Naive thymus-derived CD4-positive, alpha-beta T cell (primary cell): ENCODE measurements at regions of chr19 and their contacts with region 1.

Region 1: DNA sequence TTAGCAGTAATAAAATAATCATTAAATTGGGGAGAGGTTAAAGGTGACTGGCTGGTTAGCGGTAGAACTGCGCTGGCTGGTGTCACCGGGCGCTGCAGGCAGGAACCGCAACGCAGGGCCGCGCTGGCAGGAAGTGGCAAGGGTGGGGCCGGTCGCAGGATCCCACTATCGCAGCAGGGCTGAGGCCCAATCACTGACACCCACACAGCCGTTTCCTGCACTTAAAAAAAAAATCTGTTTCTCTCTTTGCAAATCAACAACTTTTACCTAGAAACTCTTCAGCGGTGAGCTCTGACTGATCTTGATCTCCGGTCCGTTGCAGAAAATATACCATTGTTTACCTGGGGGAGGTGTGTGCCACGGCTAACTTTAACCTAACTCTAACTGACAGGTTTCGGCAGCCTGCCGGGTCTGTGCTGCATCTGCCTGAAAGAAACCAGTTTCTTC is 46.9 kb downstream of the KLF2 start:
- DNase-seq: peak; percentile 73 to 97 (median 95)
- ATAC-seq: peak; percentile 72
- H3K4me3 ChIP-seq: peak overlapping the region; percentile 55
- H3K4me3 Mint-ChIP-seq: no peak overlapping the region
- H3K27ac ChIP-seq: peak overlapping the region; percentile 99
- H3K27ac Mint-ChIP-seq: no peak overlapping the region
- H3K4me1 ChIP-seq: peaks cover 89 to 94% of the 10 kb centered on the region in 2 donors
- H3K4me1 Mint-ChIP-seq: peaks cover 0 to 67% (median 53%) of the 10 kb centered on the region in 7 donors
- H3K27me3 ChIP-seq: no peaks in the 10 kb centered on the region
- H3K27me3 Mint-ChIP-seq: peaks cover 0 to 15% (median 0%) of the 10 kb centered on the region in 5 donors

Region 2: GRCh38 chr19:16197622-16198369 is 173.8 kb before region 1 on chr19 and contains the start of gene AP1M1:
- CTCF ChIA-PET with region 1: no interaction called
- POLR2A ChIA-PET with region 1: interaction called, 7 read pairs
- intact Hi-C with region 1: loop called in 1 of 2 experiments (anchors 2 kb)
- DNase-seq: peak; percentile 96 to 99 (median 97)
- ATAC-seq: peak; percentile 94
- H3K4me3 ChIP-seq: peak within 1 kb of the TSS; percentile 99
- H3K4me3 Mint-ChIP-seq: peak within 1 kb of the TSS; percentile 81 to 95 (median 90)
- H3K27ac ChIP-seq: peak within 1 kb of the TSS; percentile 95
- H3K27ac Mint-ChIP-seq: peak within 1 kb of the TSS; percentile 90 to 99 (median 97)
- H3K4me1 ChIP-seq: peaks cover 16 to 23% of the 10 kb centered on the region in 2 donors
- H3K4me1 Mint-ChIP-seq: peaks cover 38 to 49% (median 46%) of the 10 kb centered on the region in 7 donors
- H3K27me3 ChIP-seq: no peaks in the 10 kb centered on the region
- H3K27me3 Mint-ChIP-seq: no peaks in the 10 kb centered on the region
- total RNA-seq, gene AP1M1: 94.9 to 149 (median 125) TPM

Region 3: GRCh38 chr19:16247353-16248182 is 124.0 kb before region 1 on chr19:
- CTCF ChIA-PET with region 1: interaction called, 11 read pairs
- POLR2A ChIA-PET with region 1: interaction called, 88 read pairs
- intact Hi-C with region 1: no loop called
- DNase-seq: peak; percentile 60 to 89 (median 77)
- ATAC-seq: peak; percentile 95
- H3K4me3 ChIP-seq: no peak overlapping the region
- H3K4me3 Mint-ChIP-seq: peak overlapping the region; percentile 22 to 71 (median 56)
- H3K27ac ChIP-seq: no peak overlapping the region
- H3K27ac Mint-ChIP-seq: peak overlapping the region; percentile 48 to 94 (median 84)
- H3K4me1 ChIP-seq: peaks cover 15 to 24% of the 10 kb centered on the region in 2 donors
- H3K4me1 Mint-ChIP-seq: peaks cover 17 to 38% (median 36%) of the 10 kb centered on the region in 7 donors
- H3K27me3 ChIP-seq: no peaks in the 10 kb centered on the region
- H3K27me3 Mint-ChIP-seq: peaks cover 0 to 7% (median 0%) of the 10 kb centered on the region in 5 donors

Region 4: GRCh38 chr19:16324384-16325160 is 47.0 kb before region 1 on chr19 and contains the start of gene KLF2:
- CTCF ChIA-PET with region 1: interaction called, 159 read pairs
- POLR2A ChIA-PET with region 1: interaction called, 4,370 read pairs
- intact Hi-C with region 1: loop called (anchors 1 kb)
- DNase-seq: peak; percentile 88 to 96 (median 95)
- ATAC-seq: peak; percentile 81
- H3K4me3 ChIP-seq: peak within 1 kb of the TSS; percentile 86
- H3K4me3 Mint-ChIP-seq: peak within 1 kb of the TSS; percentile 51 to 98 (median 85)
- H3K27ac ChIP-seq: peak within 1 kb of the TSS; percentile 98
- H3K27ac Mint-ChIP-seq: peak within 1 kb of the TSS; percentile 85 to 100 (median 96)
- H3K4me1 ChIP-seq: peaks cover 23 to 30% of the 10 kb centered on the region in 2 donors
- H3K4me1 Mint-ChIP-seq: peaks cover 27 to 54% (median 48%) of the 10 kb centered on the region in 7 donors
- H3K27me3 ChIP-seq: no peaks in the 10 kb centered on the region
- H3K27me3 Mint-ChIP-seq: peaks cover 0 to 70% (median 0%) of the 10 kb centered on the region in 5 donors
- total RNA-seq, gene KLF2: 195 to 630 (median 466) TPM

Region 5: DNA sequence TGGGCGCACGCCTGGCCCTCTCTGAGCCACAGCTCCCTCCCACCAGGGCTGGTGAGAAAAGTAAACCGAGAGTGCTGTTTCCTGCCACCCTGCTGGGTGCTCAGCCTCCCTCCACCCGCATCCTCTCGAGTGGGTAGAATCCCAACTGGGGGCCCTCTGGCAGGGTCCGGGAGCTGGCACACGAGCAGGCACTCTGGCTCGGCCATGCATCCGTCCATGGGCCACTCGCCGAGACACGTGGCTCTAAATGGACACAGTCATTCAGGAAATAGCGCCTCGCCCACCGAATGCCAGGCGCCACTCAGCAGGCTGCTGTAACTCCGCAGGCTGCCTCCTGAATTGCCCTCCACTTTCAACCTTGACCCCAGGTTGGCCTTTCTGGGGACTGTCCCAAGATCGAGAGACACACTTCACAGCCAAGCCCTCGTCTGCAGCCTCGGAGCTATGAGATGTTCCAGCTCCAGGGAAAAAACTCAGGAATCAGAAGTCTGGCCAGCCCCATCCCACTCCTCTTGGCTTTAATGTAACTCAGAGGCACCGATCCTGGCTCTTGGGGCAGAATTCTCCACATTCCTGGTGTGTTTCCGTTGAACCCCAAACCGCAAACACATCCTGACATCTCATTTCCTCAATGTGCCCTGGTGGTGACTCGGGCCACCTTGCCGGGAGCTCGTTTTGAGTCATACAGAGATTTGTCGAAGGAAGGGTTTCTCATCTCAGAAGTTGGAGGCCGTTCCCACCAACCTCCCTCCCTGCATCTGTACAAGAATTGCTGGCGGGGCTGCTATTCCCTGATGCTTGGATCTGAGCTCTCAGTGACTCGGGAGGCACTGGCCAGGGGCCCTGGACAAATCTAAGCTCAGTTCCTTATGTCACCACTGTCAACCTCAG is 32.8 kb before region 1 on chr19:
- CTCF ChIA-PET with region 1: interaction called, 7 read pairs
- POLR2A ChIA-PET with region 1: interaction called, 4,370 read pairs
- intact Hi-C with region 1: loop called (anchors 1 kb)
- DNase-seq: peak in 5 of 9 donors; percentile 30 to 68 (median 50)
- ATAC-seq: peak; percentile 54
- H3K4me3 ChIP-seq: peak overlapping the region; percentile 44
- H3K4me3 Mint-ChIP-seq: peak overlapping the region; percentile 79 to 95 (median 88)
- H3K27ac ChIP-seq: peak overlapping the region; percentile 60
- H3K27ac Mint-ChIP-seq: peak overlapping the region; percentile 86 to 98 (median 91)
- H3K4me1 ChIP-seq: peaks cover 54 to 57% of the 10 kb centered on the region in 2 donors
- H3K4me1 Mint-ChIP-seq: peaks cover 28 to 78% (median 64%) of the 10 kb centered on the region in 7 donors
- H3K27me3 ChIP-seq: no peaks in the 10 kb centered on the region
- H3K27me3 Mint-ChIP-seq: peaks cover 0 to 22% (median 0%) of the 10 kb centered on the region in 5 donors

Region 6: GRCh38 chr19:16361254-16361653 is 10.3 kb before region 1 on chr19:
- CTCF ChIA-PET with region 1: interaction called, 13 read pairs
- POLR2A ChIA-PET with region 1: interaction called, 1,067 read pairs
- intact Hi-C with region 1: loop called in 1 of 2 experiments (anchors 1 kb)
- DNase-seq: no peak
- ATAC-seq: no peak
- H3K4me3 ChIP-seq: no peak overlapping the region
- H3K4me3 Mint-ChIP-seq: peak overlapping the region; percentile 60 to 89 (median 78)
- H3K27ac ChIP-seq: peak overlapping the region; percentile 56
- H3K27ac Mint-ChIP-seq: peak overlapping the region in 7 of 9 donors; percentile 84 to 97 (median 93)
- H3K4me1 ChIP-seq: peaks cover 55 to 98% of the 10 kb centered on the region in 2 donors
- H3K4me1 Mint-ChIP-seq: peaks cover 78 to 99% (median 83%) of the 10 kb centered on the region in 7 donors
- H3K27me3 ChIP-seq: no peaks in the 10 kb centered on the region
- H3K27me3 Mint-ChIP-seq: peaks cover 0 to 4% (median 0%) of the 10 kb centered on the region in 5 donors

Region 7: GRCh38 chr19:16400911-16401591 is 29.5 kb after region 1 on chr19:
- CTCF ChIA-PET with region 1: interaction called, 3 read pairs
- POLR2A ChIA-PET with region 1: interaction called, 20 read pairs
- intact Hi-C with region 1: loop called in 1 of 2 experiments (anchors 1 kb)
- DNase-seq: no peak
- ATAC-seq: no peak
- H3K4me3 ChIP-seq: no peak overlapping the region
- H3K4me3 Mint-ChIP-seq: no peak overlapping the region
- H3K27ac ChIP-seq: no peak overlapping the region
- H3K27ac Mint-ChIP-seq: peak overlapping the region in 8 of 9 donors; percentile 45 to 88 (median 78)
- H3K4me1 ChIP-seq: peaks cover 0 to 17% of the 10 kb centered on the region in 2 donors
- H3K4me1 Mint-ChIP-seq: peaks cover 0 to 33% (median 19%) of the 10 kb centered on the region in 7 donors
- H3K27me3 ChIP-seq: no peaks in the 10 kb centered on the region
- H3K27me3 Mint-ChIP-seq: no peaks in the 10 kb centered on the region